Right ventricle myocardium inferior (tissue), 1 donor: ENCODE measurements at regions of chr18 and their contacts with region 1.

Region 1: GRCh38 chr18:51582551-51582950 is 385.1 kb upstream of the MEX3C start:
- DNase-seq: no peak
- ATAC-seq: no peak

Region 2: GRCh38 chr18:50559752-50560680 is 1022.5 kb before region 1 on chr18 and contains the start of gene MAPK4:
- intact Hi-C with region 1: no loop called
- DNase-seq: no peak
- ATAC-seq: peak; percentile 93
- total RNA-seq, gene MAPK4: 34.1 TPM

Region 3: GRCh38 chr18:51480407-51481261 is 101.9 kb before region 1 on chr18:
- intact Hi-C with region 1: no loop called
- DNase-seq: no peak
- ATAC-seq: peak; percentile 73

Region 4: DNA sequence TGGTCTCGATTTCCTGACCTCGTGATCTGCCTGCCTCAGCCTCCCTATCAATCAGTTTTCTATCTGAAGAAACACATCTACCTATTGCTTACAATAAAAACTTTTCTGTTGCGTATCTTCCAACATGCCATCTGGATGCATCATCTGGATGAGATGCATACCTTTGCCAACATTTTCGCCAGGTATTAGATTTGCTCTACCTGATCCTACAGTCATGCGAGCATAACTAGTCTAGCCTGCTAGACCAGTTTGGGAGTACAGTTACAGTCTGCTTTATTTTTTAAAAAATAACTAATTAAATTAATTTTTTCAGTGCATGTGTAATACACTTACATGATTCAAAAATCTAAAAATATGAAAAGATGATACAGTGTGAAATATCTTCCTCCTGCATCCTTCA is 51.0 kb before region 1 on chr18:
- intact Hi-C with region 1: loop called (anchors 5 kb)
- DNase-seq: no peak
- ATAC-seq: no peak

Region 5: DNA sequence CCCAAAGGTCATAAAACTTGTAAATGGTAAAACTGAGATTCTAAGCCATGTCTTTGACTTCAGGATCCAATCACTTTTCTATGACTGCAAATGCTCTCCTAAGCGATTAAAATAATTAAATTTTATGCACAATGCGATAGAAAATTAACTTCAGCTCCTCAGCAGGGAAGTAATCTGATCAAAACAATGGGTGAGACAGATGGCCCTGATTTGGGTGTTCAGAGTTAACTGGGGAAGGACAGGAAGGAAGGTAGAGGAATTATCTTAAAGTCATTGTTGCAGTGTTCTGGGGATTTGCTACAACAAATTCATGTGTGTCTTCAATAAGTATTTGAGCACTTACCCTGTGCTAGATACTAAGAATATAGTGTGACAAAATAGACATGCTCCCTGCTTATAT is 60.9 kb after region 1 on chr18:
- intact Hi-C with region 1: loop called (anchors 10 kb)
- DNase-seq: no peak
- ATAC-seq: no peak

Region 6: DNA sequence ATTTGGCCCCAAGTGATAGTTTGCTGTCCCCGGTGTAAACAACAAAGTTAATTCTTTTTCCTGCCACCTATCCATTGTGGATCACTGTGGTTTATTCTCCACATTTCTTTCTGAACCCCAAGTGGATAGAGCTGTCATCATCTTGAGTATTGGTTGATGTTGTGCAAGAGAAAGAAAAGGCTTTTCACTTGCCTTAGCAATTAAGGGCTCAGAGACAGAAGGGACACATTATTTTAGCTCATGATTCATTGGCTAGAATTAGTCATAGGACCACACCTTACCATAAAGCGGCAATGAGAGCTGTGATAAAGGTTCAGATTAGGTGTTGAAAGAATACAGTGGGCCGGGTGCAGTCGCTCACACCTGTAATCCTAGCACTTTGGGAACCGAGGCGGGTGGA is 315.3 kb after region 1 on chr18:
- intact Hi-C with region 1: no loop called
- DNase-seq: no peak
- ATAC-seq: no peak